CD4-positive, alpha-beta T cell (primary cell): ENCODE measurements at regions of chr10 and their contacts with region 1.

Region 1: DNA sequence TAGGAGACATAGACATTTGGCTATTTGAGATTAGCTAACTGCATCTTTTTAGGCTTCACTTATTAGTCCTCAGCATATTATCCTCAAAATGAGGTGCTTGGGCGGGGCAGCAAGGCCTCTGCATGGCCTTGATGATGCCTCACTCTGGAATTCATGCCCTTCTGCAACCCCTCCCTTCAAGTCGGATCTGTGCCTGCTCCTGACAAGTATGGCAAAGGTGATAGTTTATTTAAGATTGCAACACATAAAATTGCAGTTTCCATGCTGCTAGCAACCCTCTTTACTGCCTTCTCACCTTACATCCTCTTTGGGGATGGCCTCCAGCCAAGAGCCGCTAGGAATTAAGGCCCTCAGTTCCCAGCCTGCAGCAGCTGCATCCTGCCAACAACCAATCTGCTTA is 241.3 kb upstream of the ADARB2 start:
- DNase-seq: no peak
- ATAC-seq: no peak
- H3K4me3 ChIP-seq: no peak overlapping the region
- H3K4me3 Mint-ChIP-seq: no peak overlapping the region
- H3K27ac ChIP-seq: no peak overlapping the region
- H3K27ac Mint-ChIP-seq: no peak overlapping the region
- H3K4me1 ChIP-seq: no peaks in the 10 kb centered on the region
- H3K4me1 Mint-ChIP-seq: no peaks in the 10 kb centered on the region
- H3K27me3 ChIP-seq: no peaks in the 10 kb centered on the region
- H3K27me3 Mint-ChIP-seq: no peaks in the 10 kb centered on the region
- CTCF ChIP-seq: no peak

Region 2: GRCh38 chr10:1882180-1882579 is 96.4 kb before region 1 on chr10:
- CTCF ChIA-PET with region 1: no interaction called
- POLR2A ChIA-PET with region 1: no interaction called
- intact Hi-C with region 1: no loop called
- DNase-seq: no peak
- ATAC-seq: no peak
- H3K4me3 ChIP-seq: no peak overlapping the region
- H3K4me3 Mint-ChIP-seq: no peak overlapping the region
- H3K27ac ChIP-seq: no peak overlapping the region
- H3K27ac Mint-ChIP-seq: no peak overlapping the region
- H3K4me1 ChIP-seq: no peaks in the 10 kb centered on the region
- H3K4me1 Mint-ChIP-seq: peaks cover 4% of the 10 kb centered on the region
- H3K27me3 ChIP-seq: no peaks in the 10 kb centered on the region
- H3K27me3 Mint-ChIP-seq: no peaks in the 10 kb centered on the region
- CTCF ChIP-seq: no peak

Region 3: GRCh38 chr10:1938317-1938716 is 40.3 kb before region 1 on chr10:
- CTCF ChIA-PET with region 1: no interaction called
- POLR2A ChIA-PET with region 1: no interaction called
- intact Hi-C with region 1: no loop called
- DNase-seq: peak; percentile 9 to 86 (median 64)
- ATAC-seq: peak; percentile 74
- H3K4me3 ChIP-seq: peak overlapping the region; percentile 3
- H3K4me3 Mint-ChIP-seq: peak overlapping the region; percentile 66
- H3K27ac ChIP-seq: peak overlapping the region; percentile 42 to 76
- H3K27ac Mint-ChIP-seq: peak overlapping the region; percentile 93
- H3K4me1 ChIP-seq: peaks cover 21% of the 10 kb centered on the region
- H3K4me1 Mint-ChIP-seq: peaks cover 46% of the 10 kb centered on the region
- H3K27me3 ChIP-seq: no peaks in the 10 kb centered on the region
- H3K27me3 Mint-ChIP-seq: no peaks in the 10 kb centered on the region
- CTCF ChIP-seq: no peak

Region 4: DNA sequence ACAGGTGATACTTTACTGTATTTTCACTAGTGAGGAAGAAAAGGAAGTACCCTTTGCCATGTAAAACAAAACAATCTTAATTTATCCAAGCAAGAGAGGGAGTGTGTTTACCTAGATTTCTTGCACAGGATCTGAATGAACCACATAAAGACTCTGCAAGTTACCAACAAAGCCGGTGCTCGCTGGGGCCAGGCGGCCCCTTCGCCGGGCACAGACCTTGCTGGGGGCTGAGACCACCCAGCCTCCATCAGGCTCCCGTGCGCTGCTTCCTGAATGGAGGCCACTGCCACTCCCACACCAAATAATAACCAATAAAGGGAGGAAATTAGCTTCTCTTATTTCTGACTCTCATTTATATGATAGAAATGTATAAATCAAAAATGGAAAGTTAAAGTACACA is 383.7 kb after region 1 on chr10:
- CTCF ChIA-PET with region 1: no interaction called
- POLR2A ChIA-PET with region 1: no interaction called
- intact Hi-C with region 1: loop called in 1 of 2 experiments (anchors 5 kb)
- DNase-seq: no peak
- ATAC-seq: no peak
- H3K4me3 ChIP-seq: no peak overlapping the region
- H3K4me3 Mint-ChIP-seq: no peak overlapping the region
- H3K27ac ChIP-seq: no peak overlapping the region
- H3K27ac Mint-ChIP-seq: no peak overlapping the region
- H3K4me1 ChIP-seq: no peaks in the 10 kb centered on the region
- H3K4me1 Mint-ChIP-seq: no peaks in the 10 kb centered on the region
- H3K27me3 ChIP-seq: no peaks in the 10 kb centered on the region
- H3K27me3 Mint-ChIP-seq: no peaks in the 10 kb centered on the region
- CTCF ChIP-seq: no peak